H1 (cell line): ENCODE measurements at regions of chr4 and their contacts with region 1.

Region 1: DNA sequence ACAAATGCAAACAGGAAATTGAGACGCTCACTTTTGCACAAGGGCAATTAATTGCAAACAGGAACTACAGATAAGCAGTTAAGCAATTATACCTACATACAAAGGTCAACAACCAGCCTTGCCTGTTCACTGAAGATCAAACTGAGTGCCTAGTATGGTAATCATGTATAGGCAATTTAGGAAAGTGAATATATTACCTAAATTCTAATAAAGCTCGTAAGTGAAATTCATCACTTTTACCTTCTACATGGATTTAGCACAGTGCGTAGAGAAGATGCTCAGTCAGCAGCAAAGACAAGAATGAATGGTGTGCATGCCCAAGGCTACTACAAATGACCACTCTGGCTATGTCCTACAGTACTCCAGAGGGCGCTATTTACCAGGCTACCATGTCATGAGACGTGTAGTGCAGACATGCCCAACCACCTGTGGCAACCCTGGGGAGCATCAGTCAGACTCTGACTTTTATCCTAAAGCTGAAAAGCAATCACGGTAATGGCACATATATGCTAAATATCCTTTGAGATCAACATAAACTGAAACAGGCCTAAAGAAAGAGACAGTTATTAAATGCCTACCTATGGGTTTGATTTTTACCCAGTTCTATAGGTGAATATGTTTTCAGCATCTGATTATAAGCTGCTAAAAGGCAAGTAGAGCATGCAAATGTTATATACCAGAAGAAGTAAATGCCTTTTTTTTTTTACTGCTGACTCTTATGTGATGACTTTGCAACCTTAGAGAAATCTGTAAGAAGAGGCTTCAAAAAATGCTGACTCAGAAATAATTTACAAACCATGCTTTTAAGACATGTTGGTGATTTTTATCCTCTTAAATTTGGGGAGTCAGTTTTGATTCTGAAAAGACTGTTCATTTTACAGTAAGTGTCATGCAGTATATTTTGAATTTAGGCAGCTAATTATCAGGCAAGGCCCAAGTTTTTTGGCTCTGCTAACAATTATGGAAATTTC is 178.0 kb downstream of the PPP3CA start:
- DNase-seq: peak; percentile 25 to 69
- H3K4me3 ChIP-seq: no peak overlapping the region
- H3K27ac ChIP-seq: no peak overlapping the region
- H3K4me1 ChIP-seq: no peaks in the 10 kb centered on the region; a peak in 1 of 7 replicates
- H3K27me3 ChIP-seq: no peaks in the 10 kb centered on the region
- CTCF ChIP-seq: peak; percentile 62 to 98 (median 88)
- EP300 ChIP-seq: no peak
- POLR2A ChIP-seq: no peak
- RAD21 ChIP-seq: peak; percentile 99 to 100

Region 2: DNA sequence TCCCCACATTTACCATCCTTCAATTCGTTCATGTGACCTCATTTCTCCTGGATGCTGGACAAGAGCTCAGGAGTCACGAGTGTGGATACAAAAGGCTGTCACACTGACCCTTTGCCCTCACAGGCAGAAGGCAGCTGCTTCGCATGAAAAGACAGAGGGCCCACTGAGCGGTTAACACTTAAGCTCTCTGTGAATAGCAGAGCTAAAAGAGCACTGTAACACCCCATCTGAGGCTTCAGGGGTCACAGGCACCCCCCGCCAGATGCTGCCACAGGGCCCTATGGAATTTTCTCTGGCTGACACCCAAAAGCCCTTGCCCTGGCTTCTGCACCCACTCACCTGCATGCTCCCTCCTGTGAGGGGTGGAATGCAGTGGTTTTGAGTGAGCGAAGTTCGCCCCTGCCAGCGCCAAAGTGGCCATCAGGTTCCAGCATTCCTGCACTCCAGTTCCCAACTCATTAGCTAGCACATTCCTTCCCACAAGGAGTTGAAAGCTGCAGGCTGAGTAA is 182.9 kb before region 1 on chr4:
- CTCF ChIA-PET with region 1: no interaction called
- POLR2A ChIA-PET with region 1: no interaction called
- DNase-seq: peak; percentile 10 to 61
- H3K4me3 ChIP-seq: no peak overlapping the region
- H3K27ac ChIP-seq: no peak overlapping the region
- H3K4me1 ChIP-seq: peaks cover 0 to 11% (median 9%) of the 10 kb centered on the region in 4 experiments; a peak in 3 of 7 replicates
- H3K27me3 ChIP-seq: no peaks in the 10 kb centered on the region
- CTCF ChIP-seq: no peak
- EP300 ChIP-seq: no peak; a peak in 1 of 3 replicates
- POLR2A ChIP-seq: no peak
- RAD21 ChIP-seq: peak in 1 of 2 experiments; percentile 1; a peak in 1 of 4 replicates

Region 3: DNA sequence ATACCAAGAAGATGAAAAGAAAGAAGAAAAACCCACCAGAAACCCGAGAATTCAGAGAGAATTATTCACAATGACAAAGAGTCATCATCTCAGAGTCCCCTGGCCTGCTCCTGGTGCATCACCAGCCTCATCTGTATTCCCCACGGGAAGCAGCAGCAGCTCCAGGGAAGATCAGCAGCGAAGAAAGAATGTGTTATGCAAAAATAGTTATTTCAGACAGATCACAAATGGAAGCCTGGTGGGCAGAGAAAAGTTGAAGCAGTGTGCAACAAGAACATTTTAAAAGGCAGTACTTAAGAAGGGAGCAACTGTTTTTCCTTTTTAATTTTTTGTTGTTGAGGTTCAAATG is 11.2 kb before region 1 on chr4:
- CTCF ChIA-PET with region 1: interaction called, 16 read pairs
- POLR2A ChIA-PET with region 1: no interaction called
- DNase-seq: no peak
- H3K4me3 ChIP-seq: no peak overlapping the region
- H3K27ac ChIP-seq: no peak overlapping the region
- H3K4me1 ChIP-seq: peaks cover 0 to 25% (median 5%) of the 10 kb centered on the region in 4 experiments; a peak in 3 of 7 replicates
- H3K27me3 ChIP-seq: no peaks in the 10 kb centered on the region
- CTCF ChIP-seq: no peak
- EP300 ChIP-seq: no peak
- POLR2A ChIP-seq: no peak
- RAD21 ChIP-seq: no peak

Region 4: GRCh38 chr4:101730291-101731117 is 561.2 kb after region 1 on chr4:
- CTCF ChIA-PET with region 1: interaction called, 17 read pairs
- POLR2A ChIA-PET with region 1: no interaction called
- DNase-seq: peak; percentile 41 to 63
- H3K4me3 ChIP-seq: no peak overlapping the region
- H3K27ac ChIP-seq: no peak overlapping the region
- H3K4me1 ChIP-seq: no peaks in the 10 kb centered on the region
- H3K27me3 ChIP-seq: no peaks in the 10 kb centered on the region; a peak in 1 of 7 replicates
- CTCF ChIP-seq: peak; percentile 28 to 76 (median 66)
- EP300 ChIP-seq: no peak
- POLR2A ChIP-seq: no peak
- RAD21 ChIP-seq: peak; percentile 90